GM13977 (cell line): ENCODE measurements at regions of chr9 and their contacts with region 1.

Region 1: GRCh38 chr9:1709345-1709744 is 305.8 kb upstream of the SMARCA2 start:
- DNase-seq: peak; percentile 13
- CTCF ChIP-seq: peak; percentile 53

Region 2: DNA sequence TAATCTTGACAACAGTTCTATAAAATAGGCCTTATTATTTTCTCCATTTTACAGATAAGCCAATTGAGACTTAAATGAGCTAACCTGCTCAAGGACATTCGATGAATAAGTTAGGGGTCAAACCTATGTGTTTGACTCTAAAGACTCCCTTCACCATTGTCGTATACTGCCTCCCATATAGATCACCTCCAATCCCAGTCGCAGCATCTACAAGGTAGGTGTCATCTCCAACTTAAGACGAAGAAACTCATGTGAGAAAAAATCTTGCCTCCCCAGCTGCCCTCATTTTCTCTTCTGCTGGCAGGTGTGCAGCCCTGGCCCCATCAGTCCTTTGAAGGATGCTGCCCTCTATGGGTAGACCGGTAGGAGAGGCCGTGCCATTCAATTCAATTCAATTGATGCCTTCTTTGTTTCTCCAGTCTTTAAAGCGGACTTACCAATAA is 230.6 kb after region 1 on chr9:
- in situ Hi-C with region 1: loop called (anchors 25 kb)
- DNase-seq: peak; percentile 73
- CTCF ChIP-seq: peak; percentile 86

Region 3: DNA sequence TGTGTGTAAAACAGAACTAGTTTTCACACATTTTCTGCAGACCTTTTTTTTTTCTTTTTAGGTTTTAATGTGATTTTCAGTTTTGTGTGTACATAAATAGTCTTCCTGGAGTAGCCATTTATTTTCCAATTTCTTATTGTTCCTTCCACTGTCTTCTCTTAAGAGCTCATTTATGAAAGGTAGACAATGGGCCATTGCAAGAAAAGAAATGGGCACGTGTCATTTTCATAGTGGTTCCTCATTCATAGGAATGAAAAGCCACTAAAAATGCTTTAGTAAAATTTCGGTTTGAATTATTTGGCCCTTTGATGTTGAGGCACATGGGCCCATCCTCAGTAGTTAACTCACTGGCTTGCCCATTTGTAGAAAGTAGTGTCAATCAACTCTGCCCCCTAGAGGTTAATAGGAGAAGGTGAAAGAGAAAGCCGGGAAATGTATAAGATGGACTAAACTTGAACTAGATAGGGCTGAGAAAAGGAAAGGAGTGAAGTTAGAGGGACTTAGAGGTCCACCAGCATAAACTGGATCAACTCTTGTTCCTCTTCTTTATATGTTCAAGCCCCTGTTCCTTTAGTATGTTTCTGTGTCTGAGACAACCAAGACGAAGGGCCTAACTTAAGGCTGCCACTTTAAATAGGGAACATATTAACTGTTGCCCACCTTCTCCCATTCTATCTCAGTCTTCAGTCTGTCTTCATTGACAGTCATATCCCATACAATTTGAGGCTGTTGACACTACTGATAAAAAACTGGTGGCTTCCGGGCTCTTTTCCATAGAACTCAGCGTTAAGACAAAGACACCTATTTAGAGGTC is 378.4 kb after region 1 on chr9:
- in situ Hi-C with region 1: loop called (anchors 25 kb)
- DNase-seq: peak; percentile 45
- CTCF ChIP-seq: peak; percentile 60